Heart right ventricle (tissue), 16 donors: ENCODE measurements at regions of chr16 and their contacts with region 1.

Region 1: GRCh38 chr16:68478526-68479250 is 30.4 kb upstream of the SMPD3 start:
- DNase-seq: peak in 1 of 2 donors; percentile 13
- ATAC-seq: peak in 6 of 8 donors; percentile 41 to 61 (median 56)
- H3K4me3 ChIP-seq: no peak overlapping the region
- H3K27ac ChIP-seq: no peak overlapping the region
- H3K4me1 ChIP-seq: peaks cover 0 to 26% (median 17%) of the 10 kb centered on the region in 9 donors
- H3K27me3 ChIP-seq: no peaks in the 10 kb centered on the region
- CTCF ChIP-seq: peak in 2 of 9 donors; percentile 16 to 33

Region 2: GRCh38 chr16:68448360-68448970 is 30.2 kb before region 1 on chr16 and contains the start of gene SMPD3:
- intact Hi-C with region 1: loop called in 1 of 10 experiments (anchors 2 kb)
- DNase-seq: peak; percentile 96 to 97
- ATAC-seq: peak; percentile 98 to 100 (median 100)
- H3K4me3 ChIP-seq: peak within 1 kb of the TSS; percentile 4 to 65 (median 54)
- H3K27ac ChIP-seq: no peak within 1 kb of the TSS
- H3K4me1 ChIP-seq: peaks cover 11 to 24% (median 17%) of the 10 kb centered on the region in 9 donors
- H3K27me3 ChIP-seq: peaks cover 0 to 41% (median 22%) of the 10 kb centered on the region in 7 donors
- CTCF ChIP-seq: peak in 3 of 9 donors; percentile 5 to 13 (median 11)
- total RNA-seq, gene SMPD3: 0.05 to 1.2 (median 0.34) TPM in 9 of 10 donors, not detected in the other

Region 3: GRCh38 chr16:68528686-68529379 is 50.1 kb after region 1 on chr16:
- intact Hi-C with region 1: no loop called
- DNase-seq: peak; percentile 80 to 86
- ATAC-seq: peak; percentile 84 to 96 (median 91)
- H3K4me3 ChIP-seq: peak overlapping the region in 4 of 10 donors; percentile 1 to 42 (median 19)
- H3K27ac ChIP-seq: no peak overlapping the region
- H3K4me1 ChIP-seq: peaks cover 3 to 23% (median 20%) of the 10 kb centered on the region in 9 donors
- H3K27me3 ChIP-seq: peaks cover 0 to 17% (median 0%) of the 10 kb centered on the region in 7 donors
- CTCF ChIP-seq: peak; percentile 87 to 98 (median 94)